Astrocyte of the cerebellum (primary cell): ENCODE measurements at regions of chr3 and their contacts with region 1.

Region 1: DNA sequence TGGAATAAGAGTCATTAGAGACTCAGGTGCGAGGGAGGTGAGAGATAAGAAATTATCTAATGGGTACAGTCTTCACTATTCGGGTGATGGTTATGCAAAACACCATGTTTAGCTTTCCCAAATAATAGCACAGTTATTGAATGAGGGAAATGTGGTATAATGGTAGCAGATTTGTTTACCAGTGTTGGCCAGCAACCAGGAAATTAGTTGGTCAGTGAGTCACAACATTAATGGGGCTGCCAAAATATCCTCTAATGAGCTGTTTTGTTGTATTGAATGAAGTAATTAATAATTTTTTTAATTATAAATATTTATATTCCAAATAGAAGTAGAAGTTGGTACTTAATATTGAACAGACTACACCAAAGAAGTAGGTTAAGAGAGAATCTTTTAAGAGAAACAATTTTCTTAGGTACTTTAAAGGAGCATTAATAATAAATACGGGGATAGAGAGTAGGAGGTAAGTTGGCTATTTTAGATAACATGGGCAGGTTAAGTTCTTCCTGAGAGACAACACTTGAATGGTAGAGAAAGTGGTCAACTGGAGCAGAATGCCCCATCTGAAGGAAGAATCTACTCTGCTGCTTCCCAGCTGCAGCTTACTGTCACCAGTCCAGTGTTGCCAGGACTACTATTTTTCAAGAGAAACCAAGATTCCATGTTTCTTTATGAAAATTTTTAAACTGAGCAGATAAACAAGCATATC is 218.8 kb downstream of the UBE2E2 start:
- DNase-seq: no peak
- H3K4me3 ChIP-seq: no peak overlapping the region
- CTCF ChIP-seq: no peak

Region 2: GRCh38 chr3:23455084-23455483 is 33.1 kb after region 1 on chr3:
- in situ Hi-C with region 1: loop called (anchors 5 kb)
- DNase-seq: peak; percentile 80
- H3K4me3 ChIP-seq: no peak overlapping the region
- CTCF ChIP-seq: no peak